ENCODE measurements at regions of chr1 and their contacts with region 1.

Region 1: GRCh38 chr1:212990276-212990675 is 25.4 kb downstream of the ANGEL2 start:
- DNase-seq: no peak
- CTCF ChIP-seq: no peak

Region 2: GRCh38 chr1:212825798-212826452 is 164.4 kb before region 1 on chr1:
- in situ Hi-C with region 1: no loop called
- DNase-seq: no peak
- CTCF ChIP-seq: no peak

Region 3: DNA sequence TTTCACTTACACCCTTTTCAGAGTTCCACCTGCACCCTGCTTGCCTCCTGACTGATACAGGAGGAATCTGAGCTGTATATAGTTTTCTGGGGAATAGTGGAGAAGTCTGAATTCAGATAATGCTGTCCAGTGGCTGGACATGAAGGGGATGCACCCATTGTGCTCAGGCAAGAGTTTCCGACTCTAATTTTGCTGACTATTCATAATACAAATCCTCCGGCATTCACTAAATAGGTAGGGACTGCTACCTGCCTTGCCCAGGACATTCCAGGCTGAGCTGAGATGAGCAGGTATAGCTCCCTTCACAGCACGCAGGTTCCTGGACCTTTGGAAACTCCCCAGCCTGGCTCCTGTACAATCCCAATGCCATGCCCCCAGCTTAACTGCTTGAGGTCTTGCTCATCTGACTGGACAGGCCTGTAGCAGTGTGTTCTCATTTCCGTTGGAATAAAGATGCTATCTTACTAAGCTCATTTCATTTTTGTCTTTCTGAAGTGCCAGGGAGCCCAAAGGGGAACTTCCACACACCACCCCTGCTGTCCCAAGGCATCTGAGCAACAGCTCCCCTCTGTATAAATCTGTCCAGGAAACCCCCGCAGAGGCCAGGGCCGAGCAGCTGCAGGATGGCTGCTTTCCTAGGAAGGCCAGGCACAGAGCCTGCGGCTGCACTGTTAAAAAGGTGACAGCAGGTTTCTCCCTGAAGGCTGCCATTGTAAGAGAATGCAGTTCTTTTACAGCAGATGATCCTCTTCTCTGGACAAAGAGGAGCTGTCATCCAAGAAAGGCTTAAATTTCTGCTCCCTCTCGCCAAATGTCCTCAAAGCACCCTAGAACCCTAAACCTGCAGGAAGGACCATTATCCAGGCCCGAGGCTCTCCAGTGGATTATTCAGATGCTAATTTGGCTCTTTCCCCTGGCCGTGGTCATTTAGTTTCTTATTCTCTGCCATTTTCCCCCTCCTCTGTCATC is 61.7 kb before region 1 on chr1:
- in situ Hi-C with region 1: loop called (anchors 10 kb)
- DNase-seq: peak; percentile 43
- CTCF ChIP-seq: no peak

Region 4: GRCh38 chr1:213051127-213051880 is 61.0 kb after region 1 on chr1 and contains the start of gene RPS6KC1:
- in situ Hi-C with region 1: no loop called
- DNase-seq: peak; percentile 90
- CTCF ChIP-seq: no peak

Measured in GM13977 (cell line).